Sigmoid colon (tissue), 7 donors: ENCODE measurements at regions of chr7 and their contacts with region 1.

Region 1: GRCh38 chr7:139230774-139231512 is at the start of gene UBN2:
- DNase-seq: peak; percentile 98
- H3K4me3 ChIP-seq: peak within 1 kb of the TSS; percentile 87 to 99 (median 98)
- H3K27ac ChIP-seq: peak within 1 kb of the TSS; percentile 92 to 99 (median 98)
- H3K4me1 ChIP-seq: peaks cover 0 to 33% (median 15%) of the 10 kb centered on the region in 4 donors
- H3K27me3 ChIP-seq: no peaks in the 10 kb centered on the region
- CTCF ChIP-seq: no peak
- EP300 ChIP-seq: peak in 1 of 4 donors; percentile 11
- POLR2A ChIP-seq: peak; percentile 46 to 57
- total RNA-seq, gene UBN2: 13.2 to 22.7 (median 14.2) TPM

Region 2: GRCh38 chr7:139054101-139054500 is 176.8 kb before region 1 on chr7:
- intact Hi-C with region 1: no loop called
- DNase-seq: no peak
- H3K4me3 ChIP-seq: no peak overlapping the region
- H3K27ac ChIP-seq: no peak overlapping the region
- H3K4me1 ChIP-seq: no peaks in the 10 kb centered on the region
- H3K27me3 ChIP-seq: no peaks in the 10 kb centered on the region
- CTCF ChIP-seq: no peak
- EP300 ChIP-seq: no peak
- POLR2A ChIP-seq: no peak

Region 3: GRCh38 chr7:139104091-139104450 is 126.9 kb before region 1 on chr7:
- intact Hi-C with region 1: loop called (anchors 2 kb)
- DNase-seq: no peak
- H3K4me3 ChIP-seq: peak overlapping the region in 1 of 4 donors; percentile 18
- H3K27ac ChIP-seq: peak overlapping the region in 2 of 4 donors; percentile 7 to 21
- H3K4me1 ChIP-seq: peaks cover 0 to 29% (median 24%) of the 10 kb centered on the region in 4 donors
- H3K27me3 ChIP-seq: no peaks in the 10 kb centered on the region
- CTCF ChIP-seq: no peak
- EP300 ChIP-seq: no peak
- POLR2A ChIP-seq: no peak

Region 4: DNA sequence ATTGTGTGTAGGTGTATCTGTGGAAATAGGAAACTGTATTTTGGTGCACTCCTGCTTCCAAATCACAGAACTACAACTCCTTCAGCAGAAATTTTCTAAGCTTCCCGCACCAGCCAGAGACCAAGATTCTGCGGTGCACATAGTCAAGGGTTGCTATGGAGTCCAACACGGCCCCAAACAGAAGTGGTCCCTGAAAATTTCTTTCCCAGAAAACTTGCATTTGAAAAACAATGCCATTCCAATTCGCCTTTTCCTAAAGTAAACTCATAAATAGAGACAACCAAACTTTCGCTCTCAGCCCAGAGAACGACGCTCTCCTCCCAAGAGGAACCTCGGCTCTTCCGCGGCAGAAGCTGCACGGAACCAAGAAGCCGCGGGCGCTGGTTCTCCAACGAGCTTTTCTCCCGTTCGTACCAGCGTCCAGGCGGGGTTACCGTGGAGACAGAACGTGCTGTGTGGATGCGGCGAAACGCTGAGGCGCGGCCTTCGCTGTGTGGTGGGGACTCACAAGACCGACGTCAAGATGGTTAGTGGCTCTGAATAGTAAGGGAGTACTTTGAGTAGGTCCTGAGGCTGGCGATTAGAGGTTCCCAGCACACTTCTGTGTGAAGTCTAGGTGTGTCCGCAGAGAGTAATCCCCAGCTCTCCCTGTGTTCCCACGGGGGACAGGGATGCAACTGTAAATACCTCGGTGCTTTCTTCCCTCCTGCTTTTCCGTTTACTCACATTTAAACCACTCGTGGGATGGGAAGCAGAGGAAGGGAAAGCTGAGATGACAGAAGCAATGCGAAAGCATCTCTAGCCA is 97.4 kb before region 1 on chr7:
- intact Hi-C with region 1: loop called (anchors 2 kb)
- DNase-seq: peak; percentile 91
- H3K4me3 ChIP-seq: peak overlapping the region; percentile 35 to 60 (median 52)
- H3K27ac ChIP-seq: peak overlapping the region; percentile 51 to 76 (median 62)
- H3K4me1 ChIP-seq: peaks cover 0 to 17% (median 10%) of the 10 kb centered on the region in 4 donors
- H3K27me3 ChIP-seq: no peaks in the 10 kb centered on the region
- CTCF ChIP-seq: no peak
- EP300 ChIP-seq: no peak
- POLR2A ChIP-seq: no peak

Region 5: GRCh38 chr7:139340037-139340807 is 109.3 kb after region 1 on chr7:
- intact Hi-C with region 1: loop called (anchors 5 kb)
- DNase-seq: peak; percentile 100
- H3K4me3 ChIP-seq: peak overlapping the region; percentile 63 to 93 (median 88)
- H3K27ac ChIP-seq: peak overlapping the region; percentile 97 to 100 (median 99)
- H3K4me1 ChIP-seq: peaks cover 0 to 17% (median 10%) of the 10 kb centered on the region in 4 donors
- H3K27me3 ChIP-seq: no peaks in the 10 kb centered on the region
- CTCF ChIP-seq: peak; percentile 39 to 72 (median 64)
- EP300 ChIP-seq: peak in 2 of 4 donors; percentile 16 to 76
- POLR2A ChIP-seq: peak in 1 of 2 donors; percentile 41

Region 6: DNA sequence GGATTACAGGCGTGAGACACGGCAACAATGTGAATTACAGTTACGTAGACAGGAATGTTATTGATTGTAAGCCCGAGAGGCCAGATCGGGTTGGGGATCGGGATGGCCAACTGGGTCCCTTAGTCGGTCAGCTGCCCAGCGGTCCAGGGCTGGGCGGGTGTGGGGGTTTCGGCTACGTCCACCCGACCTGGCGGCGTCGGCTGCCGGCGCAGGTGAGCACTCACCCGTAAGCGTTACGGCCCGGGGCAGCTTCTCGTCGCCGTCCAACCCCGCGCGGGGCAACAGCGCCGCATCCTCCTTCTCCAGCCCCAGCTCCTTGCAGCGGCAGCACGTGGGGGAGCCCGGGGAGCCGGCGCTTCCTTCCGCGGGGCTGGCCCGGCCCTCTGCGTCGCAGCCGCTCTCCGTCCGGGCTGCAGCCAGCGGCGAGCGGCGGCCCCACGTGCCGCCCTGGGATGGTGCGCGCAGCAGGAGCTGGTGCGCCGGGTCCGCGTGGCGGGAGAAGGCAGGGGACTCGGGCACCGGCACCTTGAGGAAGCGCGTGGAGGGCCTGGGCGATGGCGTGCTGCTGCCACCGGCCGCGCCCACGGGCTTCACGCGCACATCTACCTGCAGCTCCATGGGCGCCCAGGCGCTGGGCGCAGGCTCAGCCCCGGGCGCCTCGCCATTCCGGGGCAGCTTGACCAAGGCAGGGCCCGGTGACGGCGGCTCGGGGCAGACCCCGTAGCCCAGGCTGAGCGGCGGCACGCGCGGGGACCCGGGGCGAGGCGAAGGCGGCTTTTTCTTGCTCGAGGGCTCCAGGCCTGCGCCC is 251.9 kb after region 1 on chr7:
- intact Hi-C with region 1: no loop called
- DNase-seq: no peak
- H3K4me3 ChIP-seq: peak overlapping the region in 3 of 4 donors; percentile 18 to 38 (median 37)
- H3K27ac ChIP-seq: no peak overlapping the region
- H3K4me1 ChIP-seq: peaks cover 0 to 18% (median 16%) of the 10 kb centered on the region in 4 donors
- H3K27me3 ChIP-seq: peaks cover 17 to 57% (median 30%) of the 10 kb centered on the region in 3 donors
- CTCF ChIP-seq: no peak
- EP300 ChIP-seq: no peak
- POLR2A ChIP-seq: no peak